ENCODE measurements at regions of chr18 and their contacts with region 1.

Region 1: GRCh38 chr18:63320046-63320689 is 599 bp upstream of the BCL2 start:
- DNase-seq: peak; percentile 92
- ATAC-seq: peak; percentile 80
- H3K4me3 Mint-ChIP-seq: peak overlapping the region; percentile 100
- H3K27ac Mint-ChIP-seq: peak overlapping the region; percentile 81
- H3K4me1 Mint-ChIP-seq: peaks cover 23% of the 10 kb centered on the region
- H3K27me3 Mint-ChIP-seq: no peaks in the 10 kb centered on the region

Region 2: GRCh38 chr18:63016270-63016669 is 303.9 kb before region 1 on chr18:
- CTCF ChIA-PET with region 1: interaction called, 107 read pairs
- DNase-seq: peak; percentile 52
- ATAC-seq: peak; percentile 60
- H3K4me3 Mint-ChIP-seq: no peak overlapping the region
- H3K27ac Mint-ChIP-seq: no peak overlapping the region
- H3K4me1 Mint-ChIP-seq: no peaks in the 10 kb centered on the region
- H3K27me3 Mint-ChIP-seq: peaks cover 61% of the 10 kb centered on the region

Region 3: GRCh38 chr18:63138436-63139340 is 181.5 kb before region 1 on chr18:
- CTCF ChIA-PET with region 1: interaction called, 15 read pairs
- DNase-seq: no peak
- ATAC-seq: peak; percentile 34
- H3K4me3 Mint-ChIP-seq: peak overlapping the region; percentile 71
- H3K27ac Mint-ChIP-seq: peak overlapping the region; percentile 91
- H3K4me1 Mint-ChIP-seq: peaks cover 60% of the 10 kb centered on the region
- H3K27me3 Mint-ChIP-seq: no peaks in the 10 kb centered on the region

Region 4: GRCh38 chr18:63186520-63187222 is 133.5 kb before region 1 on chr18:
- CTCF ChIA-PET with region 1: interaction called, 16 read pairs
- DNase-seq: no peak
- ATAC-seq: no peak
- H3K4me3 Mint-ChIP-seq: no peak overlapping the region
- H3K27ac Mint-ChIP-seq: peak overlapping the region; percentile 48
- H3K4me1 Mint-ChIP-seq: peaks cover 80% of the 10 kb centered on the region
- H3K27me3 Mint-ChIP-seq: no peaks in the 10 kb centered on the region

Region 5: DNA sequence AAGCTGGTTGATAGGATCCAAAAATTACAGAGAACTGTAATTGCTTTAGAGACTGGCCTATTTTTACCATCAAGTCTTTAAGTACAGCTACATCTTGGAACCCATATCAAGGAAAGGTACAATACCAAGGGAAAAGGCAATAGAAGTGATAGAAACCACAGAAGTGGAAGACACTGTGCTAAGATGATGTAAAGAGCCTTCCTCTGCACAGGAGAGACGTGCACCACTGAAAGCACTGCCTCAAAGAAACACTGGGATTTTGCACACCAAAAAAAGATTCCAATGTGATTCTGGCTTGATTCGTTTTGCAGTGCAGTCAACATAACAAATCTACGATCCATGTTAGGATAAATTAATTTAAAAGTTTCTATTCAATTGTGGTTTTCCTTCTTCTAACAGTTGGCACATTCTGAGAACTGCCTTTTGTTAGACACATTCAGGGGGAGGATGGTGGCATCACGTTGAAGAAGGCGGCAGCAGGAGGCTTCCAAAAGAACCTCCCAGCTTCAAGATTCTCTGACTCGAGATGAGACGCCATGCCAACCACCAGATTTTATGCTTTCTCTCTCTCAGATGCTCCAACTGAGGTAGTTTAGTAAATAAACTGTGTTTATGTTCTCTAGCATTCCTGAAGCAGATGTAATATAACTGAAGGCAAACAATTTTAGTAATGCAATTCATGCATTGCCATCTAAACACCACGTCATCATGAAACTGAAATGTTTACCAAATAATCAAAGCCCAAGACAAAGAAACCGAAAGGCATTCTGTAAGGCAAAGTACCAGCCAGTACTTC is 103.5 kb before region 1 on chr18:
- CTCF ChIA-PET with region 1: interaction called, 83 read pairs
- DNase-seq: peak; percentile 66
- ATAC-seq: peak; percentile 31
- H3K4me3 Mint-ChIP-seq: peak overlapping the region; percentile 70
- H3K27ac Mint-ChIP-seq: peak overlapping the region; percentile 95
- H3K4me1 Mint-ChIP-seq: peaks cover 95% of the 10 kb centered on the region
- H3K27me3 Mint-ChIP-seq: no peaks in the 10 kb centered on the region

Region 6: DNA sequence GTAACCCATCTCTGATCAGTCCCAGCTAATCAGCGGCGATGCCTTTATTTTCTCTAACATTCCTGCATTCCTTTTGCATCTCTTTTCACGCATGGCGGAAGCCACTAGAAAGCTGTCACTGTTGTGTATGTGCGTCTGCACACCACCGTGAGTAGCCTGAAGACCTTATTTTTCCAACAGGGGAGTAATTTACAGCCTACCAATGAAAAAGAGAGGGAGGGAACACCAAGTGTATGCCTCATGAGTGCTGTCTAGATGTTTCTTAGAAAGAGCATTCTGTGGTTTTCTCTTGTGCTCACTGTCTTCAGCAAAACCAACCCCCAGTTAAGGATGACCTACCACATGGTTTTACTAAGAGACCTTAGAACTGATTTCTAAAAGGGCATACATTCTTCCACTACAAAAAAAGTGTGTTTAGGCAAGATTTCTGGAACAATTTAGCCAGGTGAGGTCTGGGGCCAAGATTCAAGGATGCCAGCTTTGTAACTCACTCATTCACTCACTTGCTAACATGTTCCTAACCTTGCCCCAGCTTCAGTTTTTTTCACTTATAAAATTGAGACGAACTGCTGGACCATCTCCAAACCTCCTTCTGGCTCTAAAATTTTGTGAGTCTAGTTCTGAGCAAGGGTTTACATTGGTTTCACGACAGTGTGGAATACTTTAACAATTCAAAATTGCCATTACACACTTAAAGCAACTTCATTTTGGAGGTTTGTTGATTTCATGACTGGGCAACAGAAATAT is 52.0 kb before region 1 on chr18:
- CTCF ChIA-PET with region 1: interaction called, 14 read pairs
- DNase-seq: no peak
- ATAC-seq: peak; percentile 85
- H3K4me3 Mint-ChIP-seq: peak overlapping the region; percentile 51
- H3K27ac Mint-ChIP-seq: peak overlapping the region; percentile 76
- H3K4me1 Mint-ChIP-seq: peaks cover 78% of the 10 kb centered on the region
- H3K27me3 Mint-ChIP-seq: no peaks in the 10 kb centered on the region

Region 7: GRCh38 chr18:63307551-63308200 is 12.5 kb before region 1 on chr18:
- CTCF ChIA-PET with region 1: interaction called, 43 read pairs
- DNase-seq: no peak
- ATAC-seq: no peak
- H3K4me3 Mint-ChIP-seq: no peak overlapping the region
- H3K27ac Mint-ChIP-seq: peak overlapping the region; percentile 18
- H3K4me1 Mint-ChIP-seq: peaks cover 85% of the 10 kb centered on the region
- H3K27me3 Mint-ChIP-seq: no peaks in the 10 kb centered on the region

Region 8: DNA sequence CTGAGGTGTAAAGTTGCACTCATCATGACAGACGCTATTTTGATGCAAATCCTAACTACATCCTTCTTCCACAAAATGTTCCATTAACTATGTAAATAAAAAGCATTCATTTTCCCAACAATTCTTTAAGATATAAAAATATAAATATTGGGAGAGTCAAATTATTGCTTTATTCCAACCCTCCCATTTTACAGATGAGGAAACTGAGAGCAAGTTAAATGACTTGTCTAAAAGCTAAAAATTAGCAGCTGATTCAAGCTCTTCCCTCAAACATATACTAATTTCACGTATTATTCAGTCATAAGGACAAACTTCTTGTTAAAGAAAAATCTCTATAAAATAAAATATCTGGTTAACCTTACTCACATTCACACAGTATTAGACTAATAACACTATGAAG is 30.1 kb after region 1 on chr18:
- CTCF ChIA-PET with region 1: no interaction called
- DNase-seq: no peak
- ATAC-seq: no peak
- H3K4me3 Mint-ChIP-seq: no peak overlapping the region
- H3K27ac Mint-ChIP-seq: no peak overlapping the region
- H3K4me1 Mint-ChIP-seq: no peaks in the 10 kb centered on the region
- H3K27me3 Mint-ChIP-seq: no peaks in the 10 kb centered on the region

Region 9: GRCh38 chr18:63394954-63395353 is 74.8 kb after region 1 on chr18:
- CTCF ChIA-PET with region 1: no interaction called
- DNase-seq: no peak
- ATAC-seq: no peak
- H3K4me3 Mint-ChIP-seq: no peak overlapping the region
- H3K27ac Mint-ChIP-seq: no peak overlapping the region
- H3K4me1 Mint-ChIP-seq: peaks cover 10% of the 10 kb centered on the region
- H3K27me3 Mint-ChIP-seq: no peaks in the 10 kb centered on the region